ENCODE measurements at regions of chr2 and their contacts with region 1.

Region 1: DNA sequence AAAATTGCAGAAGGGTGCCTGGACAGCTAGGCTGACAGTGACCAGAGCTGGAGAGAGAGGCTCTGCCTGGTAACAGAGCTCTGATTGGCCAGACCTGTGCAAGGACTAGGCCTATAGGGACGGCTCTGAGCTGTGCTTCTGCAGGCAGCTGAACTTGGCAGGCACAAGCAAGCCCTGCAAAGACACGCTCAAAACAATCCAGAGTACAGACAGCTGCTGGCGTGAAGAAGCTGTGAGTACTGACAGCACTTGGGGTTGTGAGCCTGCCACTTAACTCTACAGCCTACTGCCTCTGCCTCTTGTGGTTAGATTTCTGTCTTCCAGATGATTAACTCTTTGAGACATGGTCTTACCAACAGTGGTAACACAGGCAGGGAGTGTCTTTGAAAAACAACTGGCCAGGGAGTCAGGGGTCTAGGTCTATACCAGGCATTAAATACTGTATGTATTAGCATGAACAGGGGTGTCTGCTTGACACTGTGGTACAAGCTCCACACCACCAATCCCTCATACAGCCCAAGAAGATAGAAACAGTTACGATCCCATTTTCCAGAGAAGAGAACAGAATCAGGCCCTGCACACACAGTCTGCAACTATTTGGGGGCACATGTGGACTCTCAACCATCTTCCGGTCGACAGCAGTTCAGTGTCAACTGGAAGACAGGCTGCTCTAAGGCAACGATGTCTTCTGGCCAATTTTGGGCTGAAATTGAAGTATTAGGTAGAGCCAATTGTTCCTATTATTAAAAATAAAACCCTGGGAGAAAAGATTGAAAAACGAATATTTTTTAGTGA is 568.4 kb downstream of the TNS1 start:
- DNase-seq: peak; percentile 98
- H3K4me3 ChIP-seq: peak overlapping the region in 2 of 4 donors; percentile 5 to 25
- H3K27ac ChIP-seq: peak overlapping the region; percentile 74 to 83 (median 80)
- H3K4me1 ChIP-seq: peaks cover 2 to 86% (median 85%) of the 10 kb centered on the region in 4 donors
- H3K27me3 ChIP-seq: no peaks in the 10 kb centered on the region
- CTCF ChIP-seq: no peak
- EP300 ChIP-seq: no peak
- POLR2A ChIP-seq: no peak

Region 2: GRCh38 chr2:217360781-217361482 is 73.4 kb before region 1 on chr2:
- intact Hi-C with region 1: loop called (anchors 5 kb)
- DNase-seq: peak; percentile 84
- H3K4me3 ChIP-seq: no peak overlapping the region
- H3K27ac ChIP-seq: peak overlapping the region; percentile 77 to 86 (median 84)
- H3K4me1 ChIP-seq: peaks cover 0 to 79% (median 70%) of the 10 kb centered on the region in 4 donors
- H3K27me3 ChIP-seq: no peaks in the 10 kb centered on the region
- CTCF ChIP-seq: peak in 1 of 4 experiments; percentile 30
- EP300 ChIP-seq: peak; percentile 35 to 68 (median 59)
- POLR2A ChIP-seq: no peak

Region 3: DNA sequence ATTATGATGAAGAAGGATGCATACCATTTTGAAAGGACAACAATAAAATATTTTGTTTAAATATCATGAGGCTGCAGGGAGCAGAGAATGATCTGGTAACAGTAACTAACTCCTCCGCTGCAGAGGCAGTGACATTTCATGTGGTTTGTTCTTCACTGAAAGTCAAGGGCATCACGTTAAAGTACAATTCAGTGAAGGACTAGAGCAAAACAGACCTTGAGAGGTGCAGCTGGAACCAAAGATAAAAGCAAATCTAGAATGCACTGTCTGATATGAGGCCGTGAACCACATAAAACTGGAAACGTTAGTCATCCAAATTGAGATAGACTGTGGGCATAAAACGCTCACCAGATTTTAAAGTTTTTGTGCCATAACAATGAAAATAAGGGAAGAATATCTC is 51.6 kb before region 1 on chr2:
- intact Hi-C with region 1: no loop called
- DNase-seq: no peak
- H3K4me3 ChIP-seq: no peak overlapping the region
- H3K27ac ChIP-seq: peak overlapping the region in 3 of 4 donors; percentile 35 to 52 (median 50)
- H3K4me1 ChIP-seq: peaks cover 0 to 22% (median 7%) of the 10 kb centered on the region in 4 donors
- H3K27me3 ChIP-seq: no peaks in the 10 kb centered on the region
- CTCF ChIP-seq: no peak
- EP300 ChIP-seq: no peak
- POLR2A ChIP-seq: no peak

Region 4: DNA sequence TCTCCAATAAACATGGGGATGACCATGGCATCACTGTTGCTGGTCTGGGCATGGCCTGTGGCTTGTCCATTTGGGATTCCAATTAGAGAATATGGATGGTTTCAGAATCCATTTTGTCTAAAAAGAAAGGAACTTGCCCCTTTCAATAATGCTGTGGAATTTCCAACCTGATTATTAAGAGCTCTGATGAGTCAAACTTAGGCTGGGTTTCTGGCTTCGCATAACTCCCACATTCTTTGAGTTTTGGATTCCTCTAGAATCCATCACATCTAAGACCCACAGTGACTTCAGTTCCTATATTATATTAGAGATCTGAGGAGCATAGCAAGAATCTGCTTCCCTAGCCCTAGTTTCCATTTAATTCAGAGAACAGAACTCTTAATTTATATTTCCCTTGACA is 36.9 kb after region 1 on chr2:
- intact Hi-C with region 1: no loop called
- DNase-seq: no peak
- H3K4me3 ChIP-seq: no peak overlapping the region
- H3K27ac ChIP-seq: no peak overlapping the region
- H3K4me1 ChIP-seq: no peaks in the 10 kb centered on the region
- H3K27me3 ChIP-seq: no peaks in the 10 kb centered on the region
- CTCF ChIP-seq: no peak
- EP300 ChIP-seq: no peak
- POLR2A ChIP-seq: no peak